Naive thymus-derived CD4-positive, alpha-beta T cell (primary cell): ENCODE measurements at regions of chr7 and their contacts with region 1.

Region 1: GRCh38 chr7:98745722-98746318 is 124.0 kb downstream of the TMEM130 start:
- DNase-seq: peak; percentile 18 to 73 (median 57)
- ATAC-seq: peak; percentile 66
- H3K4me3 ChIP-seq: no peak overlapping the region
- H3K4me3 Mint-ChIP-seq: no peak overlapping the region
- H3K27ac ChIP-seq: no peak overlapping the region
- H3K27ac Mint-ChIP-seq: peak overlapping the region in 1 of 9 donors; percentile 19
- H3K4me1 ChIP-seq: no peaks in the 10 kb centered on the region
- H3K4me1 Mint-ChIP-seq: peaks cover 0 to 2% (median 0%) of the 10 kb centered on the region in 7 donors
- H3K27me3 ChIP-seq: no peaks in the 10 kb centered on the region
- H3K27me3 Mint-ChIP-seq: peaks cover 0 to 17% (median 4%) of the 10 kb centered on the region in 5 donors

Region 2: GRCh38 chr7:98434095-98434494 is 311.7 kb before region 1 on chr7:
- CTCF ChIA-PET with region 1: interaction called, 3 read pairs
- POLR2A ChIA-PET with region 1: no interaction called
- intact Hi-C with region 1: loop called in 1 of 2 experiments (anchors 1 kb)
- DNase-seq: no peak
- ATAC-seq: no peak
- H3K4me3 ChIP-seq: no peak overlapping the region
- H3K4me3 Mint-ChIP-seq: peak overlapping the region in 1 of 10 donors; percentile 41
- H3K27ac ChIP-seq: no peak overlapping the region
- H3K27ac Mint-ChIP-seq: no peak overlapping the region
- H3K4me1 ChIP-seq: no peaks in the 10 kb centered on the region
- H3K4me1 Mint-ChIP-seq: peaks cover 0 to 12% (median 10%) of the 10 kb centered on the region in 7 donors
- H3K27me3 ChIP-seq: no peaks in the 10 kb centered on the region
- H3K27me3 Mint-ChIP-seq: peaks cover 0 to 10% (median 0%) of the 10 kb centered on the region in 5 donors